Activated CD4-positive, alpha-beta T cell treated with anti-CD3 and anti-CD28 coated beads for 36 hours (primary cell): ENCODE measurements at regions of chr1 and their contacts with region 1.

Region 1: GRCh38 chr1:168421399-168422004 is 122.3 kb downstream of the XCL2 start:
- DNase-seq: no peak
- ATAC-seq: peak; percentile 97
- H3K4me3 Mint-ChIP-seq: peak overlapping the region; percentile 6
- H3K27ac Mint-ChIP-seq: peak overlapping the region; percentile 84
- H3K4me1 Mint-ChIP-seq: peaks cover 20% of the 10 kb centered on the region
- H3K27me3 Mint-ChIP-seq: no peaks in the 10 kb centered on the region

Region 2: DNA sequence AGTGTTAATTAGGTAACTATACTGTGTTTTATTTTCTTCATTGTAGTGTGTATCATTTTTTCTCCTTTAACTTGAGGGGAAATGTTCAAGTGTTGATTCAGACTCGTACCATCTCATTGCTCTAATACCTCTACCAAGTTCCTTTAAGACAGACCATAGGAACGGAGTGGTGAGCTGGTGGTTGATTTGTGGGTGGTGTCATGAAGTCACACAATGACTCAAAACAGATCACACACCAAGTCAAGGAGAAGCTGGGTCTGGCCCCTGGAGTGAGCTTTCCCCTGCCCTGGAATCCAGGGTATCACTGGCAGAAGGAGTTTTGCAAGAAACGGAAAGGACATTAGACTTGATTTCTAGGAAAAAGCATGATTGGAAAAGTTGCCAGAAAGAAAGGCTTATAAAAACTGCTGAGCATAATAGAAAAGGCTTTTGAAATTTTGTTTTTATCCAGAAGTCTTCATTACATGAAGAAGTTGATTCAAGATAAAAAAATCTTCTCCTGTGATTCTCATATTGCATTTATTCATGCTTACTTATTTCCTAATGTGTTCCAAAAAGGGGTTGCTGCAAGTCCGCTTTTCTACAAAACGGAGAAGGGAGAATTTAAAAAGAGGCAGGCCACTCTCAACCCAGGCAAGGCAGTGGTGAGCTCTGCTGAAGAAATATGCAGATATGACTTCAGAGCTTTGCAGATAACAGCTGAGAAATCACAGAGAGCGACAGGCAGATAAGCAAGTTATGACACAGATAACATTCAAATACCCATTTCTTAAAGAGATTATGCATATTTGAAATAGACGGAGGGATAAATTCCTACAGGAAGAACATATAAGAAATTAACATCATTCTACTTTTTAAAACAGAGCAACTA is 61.1 kb before region 1 on chr1:
- CTCF ChIA-PET with region 1: no interaction called
- POLR2A ChIA-PET with region 1: no interaction called
- intact Hi-C with region 1: loop called in 1 of 2 experiments (anchors 5 kb)
- DNase-seq: peak; percentile 67
- ATAC-seq: peak; percentile 40
- H3K4me3 Mint-ChIP-seq: no peak overlapping the region
- H3K27ac Mint-ChIP-seq: no peak overlapping the region
- H3K4me1 Mint-ChIP-seq: peaks cover 40% of the 10 kb centered on the region
- H3K27me3 Mint-ChIP-seq: no peaks in the 10 kb centered on the region